Activated naive CD4-positive, alpha-beta T cell treated with anti-CD3 and anti-CD28 coated beads for 36 hours (primary cell): ENCODE measurements at regions of chr2 and their contacts with region 1.

Region 1: GRCh38 chr2:104862058-104862941 is 8.4 kb downstream of the POU3F3 start:
- DNase-seq: no peak
- H3K4me3 Mint-ChIP-seq: peak overlapping the region; percentile 9
- H3K27ac Mint-ChIP-seq: no peak overlapping the region
- H3K4me1 Mint-ChIP-seq: peaks cover 10% of the 10 kb centered on the region
- H3K27me3 Mint-ChIP-seq: peaks cover 81% of the 10 kb centered on the region

Region 2: DNA sequence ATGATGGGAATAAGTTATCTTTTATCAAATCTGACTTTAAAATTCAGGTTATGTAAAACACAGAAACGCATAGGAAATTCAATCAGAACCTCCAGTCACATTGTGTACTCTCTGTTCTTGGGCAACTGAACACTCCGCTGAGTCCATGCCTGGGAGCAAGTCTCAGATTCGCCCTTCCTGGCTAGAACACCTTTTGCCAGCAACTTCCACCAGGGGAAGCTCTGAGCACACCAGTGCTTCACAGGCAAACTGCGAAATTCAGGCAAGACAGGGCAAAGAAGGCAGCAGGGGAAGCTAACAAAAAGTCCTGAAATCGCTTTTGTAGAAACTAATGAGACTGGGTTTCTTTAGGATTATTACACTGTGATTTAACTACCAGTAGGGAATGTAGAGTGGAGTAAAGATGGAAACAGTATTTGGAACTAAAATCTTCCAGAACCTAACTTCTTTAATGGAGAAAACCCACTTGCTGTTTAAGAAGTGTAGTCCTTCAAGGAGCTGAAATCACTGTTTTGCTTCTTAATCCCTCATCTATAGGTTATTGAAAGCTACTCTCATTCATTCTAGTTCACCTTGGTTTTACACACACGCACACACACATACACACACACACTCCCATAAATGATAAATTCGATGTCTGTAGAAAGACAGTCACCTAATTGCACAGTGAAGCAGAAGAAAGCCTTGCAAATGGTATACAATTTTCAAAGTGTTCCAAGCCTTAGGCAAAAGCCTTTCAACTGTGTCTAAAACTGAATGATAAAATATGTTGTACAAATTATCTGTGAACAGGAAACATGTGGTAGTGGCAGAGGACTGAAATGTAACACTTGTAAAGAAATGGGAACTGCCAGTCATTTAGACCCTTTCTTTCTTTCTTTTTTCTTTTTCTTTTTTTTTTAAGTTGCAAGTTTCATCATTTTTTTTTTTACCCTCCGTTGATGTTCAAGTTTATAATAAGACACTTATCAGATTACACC is 1886.0 kb before region 1 on chr2:
- CTCF ChIA-PET with region 1: no interaction called
- intact Hi-C with region 1: loop called (anchors 10 kb)
- DNase-seq: peak; percentile 26
- H3K4me3 Mint-ChIP-seq: no peak overlapping the region
- H3K27ac Mint-ChIP-seq: no peak overlapping the region
- H3K4me1 Mint-ChIP-seq: no peaks in the 10 kb centered on the region
- H3K27me3 Mint-ChIP-seq: peaks cover 4% of the 10 kb centered on the region